Activated naive CD8-positive, alpha-beta T cell treated with anti-CD3 and anti-CD28 coated beads, Interleukin-2, amount 10 ng/mL, durations not matched to agents 7 days and 5 days (primary cell): ENCODE measurements at regions of chr19 and their contacts with region 1.

Region 1: DNA sequence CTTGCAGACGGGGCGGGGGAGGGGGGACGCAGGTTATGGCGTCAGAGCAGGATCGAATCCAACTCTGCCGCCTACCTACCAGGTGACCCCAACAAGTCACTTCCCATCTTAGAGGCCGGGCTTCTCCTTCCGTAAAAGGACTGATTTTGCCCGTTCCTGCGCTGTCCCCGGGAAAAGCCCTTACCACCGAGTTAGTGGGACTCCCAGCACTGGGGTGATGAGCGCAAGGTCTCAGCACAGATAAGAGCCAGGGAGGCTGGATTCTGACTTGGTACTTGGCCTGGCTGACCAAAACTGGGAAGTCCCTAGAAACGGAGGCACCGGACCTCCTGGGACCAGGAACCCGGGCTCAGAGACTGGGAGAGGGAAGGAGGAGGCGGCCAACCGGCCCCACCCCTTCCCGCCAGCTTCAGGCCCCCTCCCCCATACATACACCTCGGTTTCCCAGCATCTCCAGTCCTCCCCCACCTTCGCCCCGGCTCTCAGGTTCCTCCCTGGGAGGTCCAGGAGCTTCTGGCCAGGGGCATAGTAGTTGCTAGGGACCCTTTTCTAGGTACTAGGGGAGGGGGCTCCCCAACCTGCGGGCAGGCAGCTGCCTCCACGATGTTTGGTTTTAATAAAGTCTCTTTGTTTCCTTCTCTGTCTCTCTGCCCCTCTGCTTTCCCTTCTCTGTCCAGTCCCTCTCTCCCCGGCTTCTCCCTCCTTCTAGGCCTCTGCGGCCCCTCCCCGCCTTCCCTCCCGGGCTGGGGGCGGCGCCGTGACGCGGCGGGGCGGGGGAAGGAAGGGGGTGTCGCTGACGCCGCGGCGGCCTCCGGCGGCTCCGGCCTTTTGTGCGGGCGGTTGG is at the start of gene GRAMD1A:
- DNase-seq: peak; percentile 85
- ATAC-seq: peak; percentile 33
- H3K4me3 Mint-ChIP-seq: peak within 1 kb of the TSS; percentile 91
- H3K27ac Mint-ChIP-seq: peak within 1 kb of the TSS; percentile 95
- H3K4me1 Mint-ChIP-seq: peaks cover 54% of the 10 kb centered on the region
- H3K27me3 Mint-ChIP-seq: no peaks in the 10 kb centered on the region
- total RNA-seq, gene GRAMD1A: 173 to 187 TPM

Region 2: GRCh38 chr19:34985249-34986022 is 14.3 kb before region 1 on chr19:
- POLR2A ChIA-PET with region 1: interaction called, 21 read pairs
- DNase-seq: peak; percentile 50
- ATAC-seq: peak; percentile 90
- H3K4me3 Mint-ChIP-seq: peak overlapping the region; percentile 79
- H3K27ac Mint-ChIP-seq: peak overlapping the region; percentile 91
- H3K4me1 Mint-ChIP-seq: peaks cover 24% of the 10 kb centered on the region
- H3K27me3 Mint-ChIP-seq: no peaks in the 10 kb centered on the region